ENCODE measurements at regions of chr20 and their contacts with region 1.

Region 1: DNA sequence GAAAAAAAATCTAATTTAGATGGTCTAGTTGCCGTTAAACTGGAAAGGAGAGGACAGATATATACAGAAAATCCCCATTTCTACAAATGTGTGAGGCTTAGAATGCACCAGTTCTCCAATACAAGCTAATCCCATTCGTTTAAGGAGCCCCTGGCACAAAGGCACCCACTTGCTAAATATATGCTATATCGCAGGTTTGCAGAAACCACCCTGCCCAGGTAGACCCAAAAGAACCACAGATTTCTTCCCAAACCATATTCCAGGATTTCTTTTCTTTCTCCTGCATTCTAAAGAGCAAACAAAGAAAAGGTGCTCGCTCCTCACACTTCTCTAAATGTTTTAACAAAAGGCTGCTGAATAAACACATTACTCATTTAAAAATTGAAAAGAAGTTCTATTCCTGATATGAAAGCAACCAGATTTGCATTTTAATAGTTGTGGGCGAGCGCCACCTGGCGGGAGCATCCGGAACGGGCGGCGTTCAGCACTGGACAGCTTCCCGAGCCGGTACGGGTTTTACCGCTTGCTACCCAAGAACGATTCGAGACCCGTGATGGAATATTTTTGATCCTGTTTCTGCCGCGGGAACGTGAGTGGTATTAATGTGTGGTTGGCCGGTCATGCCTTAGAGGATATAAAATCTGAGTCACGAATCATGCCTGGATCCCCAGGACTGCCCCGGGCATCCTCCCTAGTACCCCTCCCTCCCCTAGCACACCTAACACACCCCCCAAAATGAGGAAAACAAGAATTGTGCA is 2.1 kb downstream of the PTPRT start:
- DNase-seq: peak; percentile 76 to 89
- H3K4me3 ChIP-seq: no peak overlapping the region
- H3K4me3 Mint-ChIP-seq: no peak overlapping the region
- H3K27ac Mint-ChIP-seq: no peak overlapping the region
- H3K4me1 ChIP-seq: no peaks in the 10 kb centered on the region
- H3K4me1 Mint-ChIP-seq: no peaks in the 10 kb centered on the region
- H3K27me3 ChIP-seq: no peaks in the 10 kb centered on the region
- H3K27me3 Mint-ChIP-seq: peaks cover 20% of the 10 kb centered on the region
- CTCF ChIP-seq: peak; percentile 99

Region 2: GRCh38 chr20:41955999-41956705 is 1231.5 kb before region 1 on chr20:
- CTCF ChIA-PET with region 1: no interaction called
- POLR2A ChIA-PET with region 1: no interaction called
- intact Hi-C with region 1: loop called (anchors 1 kb)
- DNase-seq: peak; percentile 50 to 61
- H3K4me3 ChIP-seq: no peak overlapping the region
- H3K4me3 Mint-ChIP-seq: no peak overlapping the region
- H3K27ac Mint-ChIP-seq: no peak overlapping the region
- H3K4me1 ChIP-seq: no peaks in the 10 kb centered on the region
- H3K4me1 Mint-ChIP-seq: no peaks in the 10 kb centered on the region
- H3K27me3 ChIP-seq: no peaks in the 10 kb centered on the region
- H3K27me3 Mint-ChIP-seq: peaks cover 6% of the 10 kb centered on the region
- CTCF ChIP-seq: peak; percentile 65 to 80

Region 3: DNA sequence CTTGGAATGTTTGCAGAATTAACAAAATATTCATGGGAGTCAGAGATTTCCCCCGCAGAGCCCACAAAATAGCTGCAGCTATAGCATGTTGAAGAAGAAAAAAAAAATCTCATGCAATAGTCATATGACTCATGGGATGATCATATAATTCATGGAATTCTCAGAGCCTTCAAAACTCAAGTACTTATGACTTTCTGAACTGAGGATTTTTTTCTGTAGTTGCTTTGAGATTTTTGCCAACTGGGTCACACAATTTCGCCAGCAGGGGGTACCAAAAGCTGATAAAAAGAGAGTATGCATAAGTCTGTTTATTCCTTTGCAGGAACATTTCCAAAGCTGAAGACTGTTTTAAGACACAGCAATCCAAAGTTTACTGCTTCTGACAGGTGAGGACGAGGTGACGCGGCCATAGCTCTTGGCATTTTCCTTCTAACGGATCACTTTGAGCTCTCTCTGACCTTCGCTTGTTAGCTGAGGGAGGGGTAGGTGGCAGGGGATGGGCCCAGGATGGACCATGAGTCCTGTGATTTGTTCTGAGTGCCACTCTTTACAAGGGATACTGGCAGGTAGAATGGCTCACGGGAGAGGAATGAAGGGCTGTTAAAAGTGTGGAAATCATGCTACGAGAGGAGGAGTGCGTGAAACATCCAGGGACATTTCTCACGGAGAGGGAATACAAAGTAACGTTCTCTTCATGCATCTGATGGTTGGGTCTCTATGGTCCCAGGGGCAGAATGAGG is 983.3 kb before region 1 on chr20:
- CTCF ChIA-PET with region 1: no interaction called
- POLR2A ChIA-PET with region 1: no interaction called
- intact Hi-C with region 1: loop called (anchors 2 kb)
- DNase-seq: peak in 1 of 2 experiments; percentile 24
- H3K4me3 ChIP-seq: no peak overlapping the region
- H3K4me3 Mint-ChIP-seq: no peak overlapping the region
- H3K27ac Mint-ChIP-seq: no peak overlapping the region
- H3K4me1 ChIP-seq: no peaks in the 10 kb centered on the region
- H3K4me1 Mint-ChIP-seq: no peaks in the 10 kb centered on the region
- H3K27me3 ChIP-seq: no peaks in the 10 kb centered on the region
- H3K27me3 Mint-ChIP-seq: peaks cover 6% of the 10 kb centered on the region
- CTCF ChIP-seq: peak; percentile 51 to 52

Region 4: DNA sequence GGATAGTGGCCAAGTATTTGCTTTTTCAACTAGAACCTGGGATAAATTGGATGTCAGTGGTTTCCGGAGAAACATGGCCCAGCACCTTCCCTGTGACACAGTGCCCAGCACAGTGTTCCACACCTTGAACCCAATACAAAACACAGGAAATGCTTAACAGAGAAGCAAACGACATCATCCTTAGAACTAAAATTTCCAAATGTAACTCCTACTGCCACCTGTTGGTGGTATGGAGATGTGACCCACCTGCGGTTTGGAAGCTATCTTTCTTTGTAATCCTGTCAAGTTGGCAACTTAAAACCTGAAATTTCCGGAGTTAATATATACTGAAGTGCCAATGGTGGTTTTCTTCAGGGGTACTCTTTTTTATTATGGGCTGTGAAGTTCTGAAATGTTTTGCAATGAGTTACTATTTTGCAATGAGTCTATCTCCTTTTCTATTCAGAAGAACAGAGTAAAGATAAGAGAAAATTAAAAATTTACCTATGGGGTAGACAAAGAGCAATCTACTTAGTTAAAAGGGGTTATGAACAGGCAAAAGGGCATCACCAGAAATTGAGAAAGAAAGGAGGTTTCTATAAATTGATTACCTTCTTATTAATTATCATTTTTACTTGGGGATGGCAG is 656.7 kb before region 1 on chr20:
- CTCF ChIA-PET with region 1: no interaction called
- POLR2A ChIA-PET with region 1: no interaction called
- intact Hi-C with region 1: loop called (anchors 5 kb)
- DNase-seq: peak in 1 of 2 experiments; percentile 53
- H3K4me3 ChIP-seq: no peak overlapping the region
- H3K4me3 Mint-ChIP-seq: no peak overlapping the region
- H3K27ac Mint-ChIP-seq: no peak overlapping the region
- H3K4me1 ChIP-seq: no peaks in the 10 kb centered on the region
- H3K4me1 Mint-ChIP-seq: no peaks in the 10 kb centered on the region
- H3K27me3 ChIP-seq: no peaks in the 10 kb centered on the region
- H3K27me3 Mint-ChIP-seq: peaks cover 22% of the 10 kb centered on the region
- CTCF ChIP-seq: peak; percentile 82 to 92

Region 5: DNA sequence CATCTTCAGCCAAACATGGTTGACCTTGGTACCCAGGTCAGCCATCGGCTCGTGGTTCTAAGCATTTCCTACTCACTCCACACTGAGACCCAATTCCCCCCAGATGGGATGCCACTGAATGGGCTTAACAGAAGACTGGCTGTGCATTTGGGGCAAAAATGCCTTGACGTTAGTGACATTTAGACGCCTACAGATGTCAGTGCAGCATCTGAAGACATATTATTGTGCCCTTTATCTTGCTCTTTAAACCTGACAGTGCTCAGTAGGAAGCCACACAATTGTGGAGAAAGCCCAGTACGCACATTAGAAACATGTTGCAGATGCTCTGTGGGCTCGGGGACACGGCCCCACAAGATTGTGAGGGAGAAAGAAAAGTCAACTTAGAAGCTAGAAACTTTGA is 412.6 kb before region 1 on chr20:
- CTCF ChIA-PET with region 1: no interaction called
- POLR2A ChIA-PET with region 1: no interaction called
- intact Hi-C with region 1: loop called (anchors 1 kb)
- DNase-seq: no peak
- H3K4me3 ChIP-seq: no peak overlapping the region
- H3K4me3 Mint-ChIP-seq: no peak overlapping the region
- H3K27ac Mint-ChIP-seq: no peak overlapping the region
- H3K4me1 ChIP-seq: no peaks in the 10 kb centered on the region
- H3K4me1 Mint-ChIP-seq: no peaks in the 10 kb centered on the region
- H3K27me3 ChIP-seq: no peaks in the 10 kb centered on the region
- H3K27me3 Mint-ChIP-seq: peaks cover 25% of the 10 kb centered on the region
- CTCF ChIP-seq: no peak

Region 6: GRCh38 chr20:43102394-43102793 is 85.3 kb before region 1 on chr20:
- CTCF ChIA-PET with region 1: interaction called, 4 read pairs
- POLR2A ChIA-PET with region 1: no interaction called
- intact Hi-C with region 1: loop called (anchors 5 kb)
- DNase-seq: peak in 1 of 2 experiments; percentile 48
- H3K4me3 ChIP-seq: no peak overlapping the region
- H3K4me3 Mint-ChIP-seq: no peak overlapping the region
- H3K27ac Mint-ChIP-seq: no peak overlapping the region
- H3K4me1 ChIP-seq: no peaks in the 10 kb centered on the region
- H3K4me1 Mint-ChIP-seq: no peaks in the 10 kb centered on the region
- H3K27me3 ChIP-seq: no peaks in the 10 kb centered on the region
- H3K27me3 Mint-ChIP-seq: peaks cover 5% of the 10 kb centered on the region
- CTCF ChIP-seq: peak; percentile 40 to 52

Region 7: GRCh38 chr20:43408848-43409576 is 221.4 kb after region 1 on chr20:
- CTCF ChIA-PET with region 1: interaction called, 7 read pairs
- POLR2A ChIA-PET with region 1: no interaction called
- intact Hi-C with region 1: loop called (anchors 1 kb)
- DNase-seq: peak; percentile 56 to 64
- H3K4me3 ChIP-seq: no peak overlapping the region
- H3K4me3 Mint-ChIP-seq: no peak overlapping the region
- H3K27ac Mint-ChIP-seq: no peak overlapping the region
- H3K4me1 ChIP-seq: no peaks in the 10 kb centered on the region
- H3K4me1 Mint-ChIP-seq: no peaks in the 10 kb centered on the region
- H3K27me3 ChIP-seq: no peaks in the 10 kb centered on the region
- H3K27me3 Mint-ChIP-seq: peaks cover 15% of the 10 kb centered on the region
- CTCF ChIP-seq: peak; percentile 87 to 91